ENCODE measurements at regions of chr16 and their contacts with region 1.

Region 1: DNA sequence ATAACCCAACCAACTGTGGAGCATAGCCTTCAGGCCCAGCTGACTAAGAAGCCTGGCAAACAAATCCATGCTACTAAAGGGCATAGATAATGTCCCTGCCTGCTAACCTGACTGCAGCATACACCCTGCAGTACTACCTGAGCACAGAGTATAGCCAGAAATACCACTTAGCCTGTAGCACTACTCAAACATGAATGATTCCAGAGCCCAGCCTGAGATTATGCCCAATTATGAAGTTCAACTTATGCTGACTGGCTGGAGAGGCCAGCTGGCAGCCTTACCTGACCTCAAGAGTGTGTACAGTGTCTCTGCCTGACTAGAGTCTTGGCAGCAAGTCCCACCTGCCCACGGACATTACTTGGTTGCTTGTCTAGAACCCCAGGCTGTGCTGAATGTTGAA is 1265.3 kb downstream of the CDH11 start:
- H3K4me3 Mint-ChIP-seq: no peak overlapping the region
- H3K27ac Mint-ChIP-seq: no peak overlapping the region
- H3K4me1 Mint-ChIP-seq: no peaks in the 10 kb centered on the region
- H3K27me3 Mint-ChIP-seq: no peaks in the 10 kb centered on the region

Region 2: DNA sequence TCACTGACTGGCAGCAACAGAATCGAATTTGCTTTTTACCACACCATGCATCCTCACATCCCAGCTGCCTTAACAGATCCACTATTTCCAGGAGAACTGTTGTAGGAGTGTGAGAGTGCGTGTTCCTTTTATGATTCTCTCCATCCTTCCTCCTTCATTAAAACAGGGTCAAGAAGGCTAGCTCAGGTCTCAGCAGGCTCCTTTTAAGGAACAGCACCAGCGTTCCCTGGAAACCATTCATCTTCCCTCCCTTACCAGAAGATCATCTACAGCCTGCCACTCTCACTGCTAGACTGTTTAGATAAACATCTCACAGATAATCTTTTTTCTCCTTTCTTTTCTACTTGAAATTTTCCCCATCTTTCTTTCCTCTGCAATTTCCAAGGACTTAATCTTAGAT is 288.4 kb before region 1 on chr16:
- intact Hi-C with region 1: loop called (anchors 10 kb)
- H3K4me3 Mint-ChIP-seq: no peak overlapping the region
- H3K27ac Mint-ChIP-seq: no peak overlapping the region
- H3K4me1 Mint-ChIP-seq: no peaks in the 10 kb centered on the region
- H3K27me3 Mint-ChIP-seq: no peaks in the 10 kb centered on the region

Measured in dendritic cell treated with granulocyte-macrophage colony-stimulating factor and Interleukin-4, amounts not matched to agents 40 ng/mL and 50 ng/mL, for 4 days (primary cell).